Activated T-helper 1 cell treated with anti-CD3 and anti-CD28 coated beads, Interleukin-12 subunit alpha, Interleukin-12 subunit beta, Interleukin-2, Interleukin-4 antibody, amounts not matched to agents 30 ng/mL and 10 ng/mL and 1 ng/mL, durations not matched to agents 14 hours and 24 hours and 36 hours (primary cell): ENCODE measurements at regions of chr12 and their contacts with region 1.

Region 1: DNA sequence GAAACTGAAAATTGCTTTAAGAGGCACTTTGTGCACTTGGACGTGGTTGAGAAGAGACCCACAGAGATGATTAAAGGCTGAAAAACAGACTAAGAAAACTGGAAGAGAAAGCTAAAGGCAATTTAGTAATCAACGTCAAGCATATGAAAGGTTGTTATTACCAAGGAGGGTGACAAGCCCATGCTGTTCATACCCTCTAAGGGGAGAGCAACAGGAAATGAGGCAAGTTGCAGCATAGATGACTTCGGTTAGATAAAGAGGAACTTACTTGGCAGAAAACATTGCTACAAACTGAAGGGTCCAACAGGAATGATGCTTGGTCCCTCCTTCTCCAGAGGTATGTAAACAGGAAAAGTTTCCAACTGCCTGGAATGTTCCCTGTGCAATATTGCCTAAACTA is 107.8 kb downstream of the DUSP6 start:
- DNase-seq: peak; percentile 45
- H3K4me3 Mint-ChIP-seq: peak overlapping the region; percentile 32
- H3K27ac Mint-ChIP-seq: peak overlapping the region; percentile 84
- H3K4me1 Mint-ChIP-seq: peaks cover 53% of the 10 kb centered on the region
- H3K27me3 Mint-ChIP-seq: no peaks in the 10 kb centered on the region

Region 2: DNA sequence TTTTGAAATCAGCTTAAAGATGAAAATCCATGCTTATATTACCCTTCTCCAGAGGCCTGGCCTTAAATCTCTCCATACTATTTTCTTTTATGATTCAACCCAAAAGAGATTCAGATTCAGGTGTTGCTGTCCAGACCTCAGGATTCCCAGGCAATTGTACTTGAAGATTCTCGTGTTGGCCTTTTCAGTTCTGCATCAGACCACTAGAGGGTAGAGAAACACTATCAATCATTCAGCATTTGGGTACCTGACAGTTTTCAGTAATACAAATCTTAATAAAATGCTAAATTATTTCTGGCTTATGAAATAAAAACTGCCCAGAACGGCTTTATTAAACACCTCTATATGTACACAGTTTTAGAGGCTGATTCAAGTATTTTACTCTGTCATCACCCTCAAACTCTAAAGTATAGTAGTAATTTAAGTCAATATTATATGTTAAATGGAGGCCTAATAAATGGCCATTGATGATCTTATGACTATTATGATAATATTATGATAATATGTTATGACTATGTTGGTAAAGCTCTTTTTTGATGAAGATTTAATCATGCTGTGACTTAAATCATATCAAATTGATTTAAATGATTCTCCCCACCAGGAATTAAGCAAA is 193.4 kb before region 1 on chr12:
- intact Hi-C with region 1: no loop called
- DNase-seq: no peak
- H3K4me3 Mint-ChIP-seq: no peak overlapping the region
- H3K27ac Mint-ChIP-seq: no peak overlapping the region
- H3K4me1 Mint-ChIP-seq: peaks cover 31% of the 10 kb centered on the region
- H3K27me3 Mint-ChIP-seq: no peaks in the 10 kb centered on the region

Region 3: DNA sequence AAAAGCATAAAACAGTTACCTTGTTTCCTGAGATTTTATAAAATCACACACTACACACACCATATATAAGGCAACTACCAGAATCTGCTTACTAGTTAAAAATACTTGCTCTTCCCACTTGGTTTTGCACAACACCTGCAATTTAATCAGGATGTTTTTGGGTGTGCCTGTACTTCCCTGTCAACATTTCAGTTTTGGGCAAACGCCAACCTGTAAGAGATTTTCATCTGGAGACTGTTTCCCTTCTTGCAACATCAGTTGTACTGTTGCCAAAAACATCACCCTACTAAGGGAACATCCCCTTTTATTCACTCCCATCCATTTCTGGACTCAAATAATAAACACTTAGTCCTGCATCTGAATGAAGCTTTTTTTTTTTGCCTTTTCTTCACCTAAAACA is 64.6 kb before region 1 on chr12:
- intact Hi-C with region 1: loop called (anchors 1 kb)
- DNase-seq: no peak
- H3K4me3 Mint-ChIP-seq: peak overlapping the region; percentile 48
- H3K27ac Mint-ChIP-seq: peak overlapping the region; percentile 95
- H3K4me1 Mint-ChIP-seq: peaks cover 62% of the 10 kb centered on the region
- H3K27me3 Mint-ChIP-seq: no peaks in the 10 kb centered on the region

Region 4: DNA sequence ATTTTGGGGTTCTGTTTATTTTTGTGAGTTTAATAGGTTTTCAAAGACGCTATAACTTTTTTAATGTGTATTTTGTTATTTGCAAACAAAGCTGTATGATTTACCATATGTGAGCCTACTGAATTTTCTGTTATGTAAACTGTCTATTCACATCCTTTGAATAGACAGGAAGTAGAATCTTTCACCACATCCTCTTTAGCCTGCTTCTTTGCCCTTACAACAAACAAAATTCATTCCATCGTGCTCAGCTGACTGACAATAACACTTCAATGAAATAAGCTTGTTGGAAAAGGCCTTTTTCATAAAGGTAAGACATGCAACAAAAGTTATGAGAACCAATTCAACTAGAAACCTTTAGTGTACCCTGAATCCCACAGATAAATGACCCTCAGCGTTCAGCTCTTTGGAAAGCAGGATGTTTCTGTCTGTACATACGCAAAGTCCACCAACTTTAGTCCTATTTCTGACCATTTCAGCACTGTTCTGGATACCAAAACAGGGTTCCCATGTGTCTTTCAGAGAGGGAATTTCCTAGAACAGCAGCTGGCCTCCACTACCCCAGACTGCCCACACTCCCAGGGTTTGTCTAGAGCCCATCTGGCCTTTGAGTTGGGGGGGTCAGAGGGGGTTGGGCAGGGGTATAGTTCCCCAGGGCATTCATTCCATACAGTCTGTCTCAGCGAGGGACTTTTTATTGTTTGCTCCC is 36.5 kb after region 1 on chr12:
- intact Hi-C with region 1: loop called (anchors 1 kb)
- DNase-seq: peak; percentile 8
- H3K4me3 Mint-ChIP-seq: peak overlapping the region; percentile 42
- H3K27ac Mint-ChIP-seq: peak overlapping the region; percentile 89
- H3K4me1 Mint-ChIP-seq: peaks cover 45% of the 10 kb centered on the region
- H3K27me3 Mint-ChIP-seq: no peaks in the 10 kb centered on the region

Region 5: GRCh38 chr12:89389755-89390661 is 145.5 kb after region 1 on chr12:
- intact Hi-C with region 1: loop called (anchors 5 kb)
- DNase-seq: no peak
- H3K4me3 Mint-ChIP-seq: no peak overlapping the region
- H3K27ac Mint-ChIP-seq: peak overlapping the region; percentile 78
- H3K4me1 Mint-ChIP-seq: peaks cover 33% of the 10 kb centered on the region
- H3K27me3 Mint-ChIP-seq: no peaks in the 10 kb centered on the region

Region 6: GRCh38 chr12:89470741-89471509 is 226.4 kb after region 1 on chr12:
- intact Hi-C with region 1: loop called (anchors 2 kb)
- DNase-seq: no peak
- H3K4me3 Mint-ChIP-seq: no peak overlapping the region
- H3K27ac Mint-ChIP-seq: peak overlapping the region; percentile 22
- H3K4me1 Mint-ChIP-seq: peaks cover 76% of the 10 kb centered on the region
- H3K27me3 Mint-ChIP-seq: no peaks in the 10 kb centered on the region